ENCODE measurements at regions of chrX and their contacts with region 1.

Region 1: DNA sequence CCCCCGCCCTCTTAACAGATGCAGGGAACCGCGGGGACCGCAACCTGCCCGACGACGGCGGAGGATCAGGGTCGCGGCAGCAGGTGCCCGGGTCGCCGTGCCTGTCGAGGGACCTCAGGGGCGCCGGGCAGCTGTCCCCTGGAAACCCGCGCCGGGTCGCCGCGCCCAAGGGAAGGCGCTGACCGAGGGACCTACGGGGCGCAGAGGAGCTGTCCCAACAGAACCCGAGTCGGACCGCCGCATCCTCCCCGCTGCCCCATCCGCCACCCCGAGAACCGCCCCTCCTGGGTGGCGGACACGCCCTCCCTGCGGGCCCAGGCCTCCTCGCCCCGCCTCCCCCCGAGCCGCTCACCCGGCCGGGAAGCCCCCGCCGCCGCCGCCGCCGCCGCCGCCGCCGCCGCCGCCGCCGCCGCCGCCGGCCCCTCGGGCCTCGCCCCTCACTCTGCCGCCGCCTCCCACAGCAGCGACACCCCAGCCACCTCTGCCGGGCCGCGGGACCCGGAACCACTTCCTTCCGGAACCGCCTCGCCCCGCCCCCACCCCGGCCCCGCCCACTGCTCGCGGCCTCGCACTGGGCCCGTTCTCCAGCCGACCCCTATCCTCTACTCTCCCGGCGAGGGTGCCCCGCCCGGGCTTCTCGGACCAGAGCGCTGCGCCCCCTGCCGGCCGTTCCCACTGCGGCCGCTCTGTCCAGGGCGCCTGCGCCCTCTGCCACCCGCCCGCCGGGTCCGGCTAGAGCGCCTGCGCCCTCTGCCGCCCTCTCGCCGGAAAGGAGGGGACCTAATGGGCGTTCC is at the start of gene BCLAF3:
- DNase-seq: peak; percentile 65 to 92 (median 83)
- ATAC-seq: peak; percentile 83
- H3K4me3 ChIP-seq: peak within 1 kb of the TSS; percentile 55 to 62
- H3K4me3 Mint-ChIP-seq: peak within 1 kb of the TSS; percentile 92
- H3K27ac ChIP-seq: peak within 1 kb of the TSS; percentile 48 to 76
- H3K27ac Mint-ChIP-seq: peak within 1 kb of the TSS; percentile 97
- H3K4me1 ChIP-seq: peaks cover 5% of the 10 kb centered on the region
- H3K4me1 Mint-ChIP-seq: peaks cover 22% of the 10 kb centered on the region
- H3K27me3 ChIP-seq: no peaks in the 10 kb centered on the region
- H3K27me3 Mint-ChIP-seq: no peaks in the 10 kb centered on the region
- CTCF ChIP-seq: peak; percentile 47
- total RNA-seq, gene BCLAF3: 4.4 to 5.3 TPM

Region 2: GRCh38 chrX:18984381-18985185 is 1006.2 kb before region 1 on chrX:
- CTCF ChIA-PET with region 1: no interaction called
- POLR2A ChIA-PET with region 1: no interaction called
- intact Hi-C with region 1: loop called in 1 of 2 experiments (anchors 10 kb)
- DNase-seq: peak; percentile 78 to 90 (median 82)
- ATAC-seq: peak; percentile 88
- H3K4me3 ChIP-seq: peak overlapping the region; percentile 75 to 79
- H3K4me3 Mint-ChIP-seq: peak overlapping the region; percentile 83
- H3K27ac ChIP-seq: peak overlapping the region; percentile 82 to 95
- H3K27ac Mint-ChIP-seq: peak overlapping the region; percentile 94
- H3K4me1 ChIP-seq: peaks cover 15% of the 10 kb centered on the region
- H3K4me1 Mint-ChIP-seq: peaks cover 27% of the 10 kb centered on the region
- H3K27me3 ChIP-seq: no peaks in the 10 kb centered on the region
- H3K27me3 Mint-ChIP-seq: no peaks in the 10 kb centered on the region
- CTCF ChIP-seq: peak; percentile 27

Region 3: GRCh38 chrX:19682712-19683331 is 307.9 kb before region 1 on chrX:
- CTCF ChIA-PET with region 1: no interaction called
- POLR2A ChIA-PET with region 1: no interaction called
- intact Hi-C with region 1: loop called in 1 of 2 experiments (anchors 2 kb)
- DNase-seq: peak; percentile 54 to 94 (median 72)
- ATAC-seq: peak; percentile 74
- H3K4me3 ChIP-seq: no peak overlapping the region
- H3K4me3 Mint-ChIP-seq: peak overlapping the region; percentile 49
- H3K27ac ChIP-seq: peak overlapping the region; percentile 53 to 88
- H3K27ac Mint-ChIP-seq: peak overlapping the region; percentile 98
- H3K4me1 ChIP-seq: peaks cover 45% of the 10 kb centered on the region
- H3K4me1 Mint-ChIP-seq: peaks cover 85% of the 10 kb centered on the region
- H3K27me3 ChIP-seq: no peaks in the 10 kb centered on the region
- H3K27me3 Mint-ChIP-seq: no peaks in the 10 kb centered on the region
- CTCF ChIP-seq: no peak

Region 4: GRCh38 chrX:19904778-19905367 is 85.9 kb before region 1 on chrX:
- CTCF ChIA-PET with region 1: interaction called, 13 read pairs
- POLR2A ChIA-PET with region 1: interaction called, 3 read pairs
- intact Hi-C with region 1: loop called (anchors 1 to 2 kb)
- DNase-seq: peak in 4 of 9 experiments; percentile 9 to 71 (median 38)
- ATAC-seq: peak; percentile 69
- H3K4me3 ChIP-seq: no peak overlapping the region
- H3K4me3 Mint-ChIP-seq: no peak overlapping the region
- H3K27ac ChIP-seq: no peak overlapping the region
- H3K27ac Mint-ChIP-seq: no peak overlapping the region
- H3K4me1 ChIP-seq: no peaks in the 10 kb centered on the region
- H3K4me1 Mint-ChIP-seq: peaks cover 6% of the 10 kb centered on the region
- H3K27me3 ChIP-seq: no peaks in the 10 kb centered on the region
- H3K27me3 Mint-ChIP-seq: no peaks in the 10 kb centered on the region
- CTCF ChIP-seq: peak; percentile 43

Region 5: DNA sequence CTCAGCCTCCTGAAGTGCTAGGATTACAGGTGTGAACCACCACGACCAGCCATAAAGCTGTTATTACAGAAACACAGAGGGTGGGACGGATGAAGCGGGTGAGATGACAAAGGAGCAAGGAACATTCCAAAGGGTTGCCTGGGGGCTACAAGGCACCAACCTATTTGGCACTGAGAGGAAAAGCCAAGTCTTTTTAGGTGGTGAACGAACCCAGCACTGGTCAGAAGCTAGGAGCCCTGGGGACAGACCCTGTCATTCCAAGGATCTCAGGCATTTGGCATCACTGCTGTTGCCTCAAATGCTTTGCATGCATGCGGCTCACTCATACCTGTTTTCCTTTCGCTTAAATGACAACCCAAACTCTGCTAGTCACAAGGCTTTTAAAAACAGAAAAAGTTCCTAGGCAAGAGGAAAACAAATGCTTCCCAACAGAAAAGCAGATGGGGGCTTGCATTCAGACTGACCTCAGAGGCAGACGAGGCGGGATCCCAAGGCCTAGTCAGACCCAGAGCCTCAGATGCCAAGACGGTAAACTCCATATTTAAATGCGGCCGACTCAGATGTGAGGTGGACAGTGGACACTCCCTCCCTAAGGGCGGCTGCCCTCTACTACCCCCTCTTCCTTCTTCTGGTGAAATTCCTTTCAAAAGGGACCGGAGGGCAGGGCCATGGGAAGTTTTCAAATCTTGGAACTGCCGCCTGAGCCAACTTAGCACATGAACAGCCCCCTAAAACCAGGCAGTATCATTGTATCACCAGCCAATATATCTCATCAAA is 121.5 kb after region 1 on chrX:
- CTCF ChIA-PET with region 1: no interaction called
- POLR2A ChIA-PET with region 1: no interaction called
- intact Hi-C with region 1: no loop called
- DNase-seq: no peak
- ATAC-seq: no peak
- H3K4me3 ChIP-seq: no peak overlapping the region
- H3K4me3 Mint-ChIP-seq: no peak overlapping the region
- H3K27ac ChIP-seq: no peak overlapping the region
- H3K27ac Mint-ChIP-seq: no peak overlapping the region
- H3K4me1 ChIP-seq: no peaks in the 10 kb centered on the region
- H3K4me1 Mint-ChIP-seq: peaks cover 3% of the 10 kb centered on the region
- H3K27me3 ChIP-seq: no peaks in the 10 kb centered on the region
- H3K27me3 Mint-ChIP-seq: peaks cover 13% of the 10 kb centered on the region
- CTCF ChIP-seq: no peak

Region 6: GRCh38 chrX:20266810-20267606 is 276.3 kb after region 1 on chrX and contains the start of gene RPS6KA3:
- CTCF ChIA-PET with region 1: no interaction called
- POLR2A ChIA-PET with region 1: no interaction called
- intact Hi-C with region 1: loop called in 1 of 2 experiments (anchors 2 kb)
- DNase-seq: peak; percentile 79 to 94 (median 89)
- ATAC-seq: peak; percentile 83
- H3K4me3 ChIP-seq: peak within 1 kb of the TSS; percentile 70 to 85
- H3K4me3 Mint-ChIP-seq: peak within 1 kb of the TSS; percentile 96
- H3K27ac ChIP-seq: peak within 1 kb of the TSS; percentile 80 to 83
- H3K27ac Mint-ChIP-seq: peak within 1 kb of the TSS; percentile 97
- H3K4me1 ChIP-seq: peaks cover 14% of the 10 kb centered on the region
- H3K4me1 Mint-ChIP-seq: peaks cover 19% of the 10 kb centered on the region
- H3K27me3 ChIP-seq: no peaks in the 10 kb centered on the region
- H3K27me3 Mint-ChIP-seq: no peaks in the 10 kb centered on the region
- CTCF ChIP-seq: no peak
- total RNA-seq, gene RPS6KA3: 36.9 to 37.3 TPM